Activated CD4-positive, alpha-beta T cell treated with anti-CD3 and anti-CD28 coated beads for 36 hours (primary cell): ENCODE measurements at regions of chr6 and their contacts with region 1.

Region 1: DNA sequence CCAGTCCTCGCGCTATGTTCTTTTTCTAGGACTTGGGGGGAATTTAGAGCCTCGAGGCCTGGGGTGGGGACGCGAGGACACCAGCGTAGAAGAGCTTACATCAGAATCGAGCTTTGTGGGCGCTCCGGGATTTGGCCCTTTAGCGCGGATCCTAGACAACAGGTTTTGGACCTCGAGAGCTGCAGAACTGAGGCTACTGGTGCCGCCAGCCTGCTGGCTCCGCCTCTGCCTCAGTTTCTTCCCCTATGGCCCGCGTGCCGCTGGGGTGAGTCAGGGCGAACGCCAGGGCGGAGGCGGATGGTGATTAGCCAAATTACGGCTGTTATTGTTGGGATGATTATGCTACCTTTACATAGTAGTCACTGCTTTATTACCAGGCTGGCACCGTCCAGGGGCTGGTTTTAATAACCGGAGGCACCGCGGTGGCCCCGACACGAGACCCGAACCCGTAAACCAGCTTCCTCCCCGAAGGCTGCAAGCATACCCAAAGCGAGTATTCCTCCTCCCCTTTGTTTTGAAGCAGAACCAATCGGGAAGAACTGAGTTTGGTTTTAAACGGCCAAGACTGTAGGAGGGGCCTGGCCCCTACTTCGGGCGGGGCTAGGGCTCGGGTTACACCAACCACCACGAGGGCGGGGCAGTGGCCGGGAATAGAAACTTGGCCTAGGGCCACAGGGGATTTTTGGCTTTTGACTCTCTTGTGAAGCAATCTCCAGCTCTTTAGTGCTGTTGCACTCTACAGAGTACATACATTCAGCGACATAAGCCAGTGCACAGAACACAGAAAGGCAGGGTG is 639 bp upstream of the GTPBP2 start:
- DNase-seq: peak; percentile 96
- ATAC-seq: peak; percentile 77
- H3K4me3 Mint-ChIP-seq: peak overlapping the region; percentile 88
- H3K27ac Mint-ChIP-seq: peak overlapping the region; percentile 100
- H3K4me1 Mint-ChIP-seq: peaks cover 33% of the 10 kb centered on the region
- H3K27me3 Mint-ChIP-seq: no peaks in the 10 kb centered on the region

Region 2: GRCh38 chr6:43228951-43229802 is 400.5 kb before region 1 on chr6 and contains the start of gene DNPH1:
- CTCF ChIA-PET with region 1: no interaction called
- POLR2A ChIA-PET with region 1: no interaction called
- intact Hi-C with region 1: loop called in 1 of 2 experiments (anchors 5 kb)
- DNase-seq: peak; percentile 88
- ATAC-seq: peak; percentile 82
- H3K4me3 Mint-ChIP-seq: peak within 1 kb of the TSS; percentile 92
- H3K27ac Mint-ChIP-seq: peak within 1 kb of the TSS; percentile 91
- H3K4me1 Mint-ChIP-seq: peaks cover 41% of the 10 kb centered on the region
- H3K27me3 Mint-ChIP-seq: peaks cover 2% of the 10 kb centered on the region
- total RNA-seq, gene DNPH1: 58.5 to 80.3 TPM

Region 3: DNA sequence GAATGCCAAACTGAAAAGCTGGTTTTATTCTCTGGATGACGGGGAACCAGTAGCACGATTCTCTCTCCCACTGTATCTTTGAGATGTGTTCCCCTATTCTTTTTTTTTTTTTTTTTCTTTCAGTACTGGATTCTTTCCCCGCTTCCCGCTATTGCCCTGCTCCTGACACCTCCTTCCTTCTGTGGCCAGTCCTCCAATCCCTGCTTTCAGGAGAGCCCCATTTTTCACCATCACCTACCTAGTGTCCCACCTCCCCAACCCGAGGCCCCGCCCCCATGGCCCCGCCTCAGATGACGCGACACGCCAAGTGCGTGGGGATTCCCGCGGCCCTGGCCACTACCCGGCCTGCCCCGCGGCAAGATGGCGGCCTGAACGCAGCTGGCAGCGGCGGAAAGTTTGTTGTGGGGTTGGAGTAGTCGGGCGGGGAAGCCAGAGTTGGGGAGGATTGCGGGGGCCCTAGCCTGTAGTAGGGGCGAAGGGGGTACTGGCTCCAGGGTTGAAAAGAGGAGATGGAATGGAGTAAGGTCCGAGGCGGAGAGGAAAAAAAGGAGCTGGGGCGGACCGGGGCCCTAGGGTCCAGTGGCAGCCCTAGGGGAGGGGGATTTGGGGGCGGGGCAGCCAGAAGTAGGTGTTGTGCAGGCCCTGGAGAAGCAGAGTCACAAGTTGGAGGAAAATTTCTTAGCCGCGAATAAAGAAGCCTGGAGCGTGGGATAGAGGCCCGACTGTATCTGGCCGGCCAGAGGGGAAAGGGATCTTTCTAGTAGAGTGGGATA is 152.3 kb before region 1 on chr6 and contains the start of gene TJAP1:
- CTCF ChIA-PET with region 1: no interaction called
- POLR2A ChIA-PET with region 1: no interaction called
- intact Hi-C with region 1: loop called in 1 of 2 experiments (anchors 1 kb)
- DNase-seq: peak; percentile 98
- ATAC-seq: peak; percentile 99
- H3K4me3 Mint-ChIP-seq: peak within 1 kb of the TSS; percentile 98
- H3K27ac Mint-ChIP-seq: peak within 1 kb of the TSS; percentile 82
- H3K4me1 Mint-ChIP-seq: peaks cover 38% of the 10 kb centered on the region
- H3K27me3 Mint-ChIP-seq: no peaks in the 10 kb centered on the region
- total RNA-seq, gene TJAP1: 35.6 to 37.2 TPM

Region 4: GRCh38 chr6:43575772-43576551 is 53.7 kb before region 1 on chr6 and contains the starts of genes POLH and XPO5:
- CTCF ChIA-PET with region 1: interaction called, 3 read pairs
- POLR2A ChIA-PET with region 1: interaction called, 8 read pairs
- intact Hi-C with region 1: loop called (anchors 1 to 5 kb)
- DNase-seq: peak; percentile 95
- ATAC-seq: peak; percentile 91
- H3K4me3 Mint-ChIP-seq: peak within 1 kb of the TSS; percentile 90
- H3K27ac Mint-ChIP-seq: peak within 1 kb of the TSS; percentile 86
- H3K4me1 Mint-ChIP-seq: peaks cover 44% of the 10 kb centered on the region
- H3K27me3 Mint-ChIP-seq: no peaks in the 10 kb centered on the region
- total RNA-seq, gene POLH: 35.2 to 37.9 TPM
- total RNA-seq, gene XPO5: 108 to 109 TPM

Region 5: GRCh38 chr6:43715056-43715788 is 85.5 kb after region 1 on chr6:
- CTCF ChIA-PET with region 1: no interaction called
- POLR2A ChIA-PET with region 1: no interaction called
- intact Hi-C with region 1: no loop called
- DNase-seq: no peak
- ATAC-seq: no peak
- H3K4me3 Mint-ChIP-seq: no peak overlapping the region
- H3K27ac Mint-ChIP-seq: no peak overlapping the region
- H3K4me1 Mint-ChIP-seq: no peaks in the 10 kb centered on the region
- H3K27me3 Mint-ChIP-seq: peaks cover 15% of the 10 kb centered on the region

Region 6: GRCh38 chr6:44127186-44128019 is 497.7 kb after region 1 on chr6 and contains the starts of genes MRPL14 and TMEM63B:
- CTCF ChIA-PET with region 1: no interaction called
- POLR2A ChIA-PET with region 1: no interaction called
- intact Hi-C with region 1: loop called in 1 of 2 experiments (anchors 1 kb)
- DNase-seq: peak; percentile 95
- ATAC-seq: peak; percentile 81
- H3K4me3 Mint-ChIP-seq: peak within 1 kb of the TSS; percentile 82
- H3K27ac Mint-ChIP-seq: peak within 1 kb of the TSS; percentile 96
- H3K4me1 Mint-ChIP-seq: peaks cover 46% of the 10 kb centered on the region
- H3K27me3 Mint-ChIP-seq: no peaks in the 10 kb centered on the region
- total RNA-seq, gene MRPL14: 29.5 to 43.3 TPM
- total RNA-seq, gene TMEM63B: 10.9 to 15.2 TPM

Region 7: DNA sequence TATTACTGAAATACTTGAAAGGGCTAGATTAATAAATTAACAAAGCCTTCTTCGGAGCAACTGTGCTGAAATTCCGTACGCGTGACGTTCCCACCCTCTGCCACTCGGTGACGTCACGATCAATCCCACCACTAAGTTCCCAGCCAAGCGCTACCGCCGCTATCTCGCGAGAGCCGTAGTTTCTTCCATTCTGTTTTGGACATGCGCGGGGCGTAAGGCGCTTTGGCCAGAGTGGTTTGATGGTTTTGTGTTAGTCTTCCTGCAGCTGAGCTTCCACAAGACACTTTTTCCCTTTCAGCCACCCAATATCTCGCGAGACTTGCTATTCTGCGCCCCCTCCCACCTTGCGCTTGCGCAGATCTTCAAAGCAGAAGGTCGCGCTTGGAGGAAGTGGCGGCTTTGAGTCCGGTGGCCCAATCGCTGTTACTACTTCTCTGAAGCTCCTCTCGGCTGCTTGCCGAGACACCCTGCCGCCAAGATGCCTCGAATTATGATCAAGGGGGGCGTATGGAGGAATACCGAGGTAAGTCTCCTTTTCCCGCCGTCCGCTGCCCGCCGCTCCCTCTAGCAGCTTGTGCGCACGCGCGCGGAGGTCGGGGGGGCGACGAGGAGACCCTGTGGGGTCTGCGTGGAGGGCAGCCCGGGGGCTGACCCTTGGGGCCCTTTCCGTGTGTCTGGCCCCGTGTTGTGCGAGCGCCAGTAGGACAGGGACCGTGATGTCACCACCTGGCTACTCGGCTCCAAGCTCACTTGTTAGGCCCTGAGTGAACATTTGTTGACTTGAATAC is 757.8 kb after region 1 on chr6 and contains the start of gene CDC5L:
- CTCF ChIA-PET with region 1: no interaction called
- POLR2A ChIA-PET with region 1: no interaction called
- intact Hi-C with region 1: loop called in 1 of 2 experiments (anchors 1 kb)
- DNase-seq: peak; percentile 95
- ATAC-seq: peak; percentile 95
- H3K4me3 Mint-ChIP-seq: peak within 1 kb of the TSS; percentile 97
- H3K27ac Mint-ChIP-seq: peak within 1 kb of the TSS; percentile 98
- H3K4me1 Mint-ChIP-seq: peaks cover 31% of the 10 kb centered on the region
- H3K27me3 Mint-ChIP-seq: no peaks in the 10 kb centered on the region
- total RNA-seq, gene CDC5L: 25.1 to 28.9 TPM